Heart left ventricle (tissue), 16 donors: ENCODE measurements at regions of chr9 and their contacts with region 1.

Region 1: GRCh38 chr9:4464911-4465513 is 25.3 kb upstream of the SLC1A1 start:
- DNase-seq: no peak
- ATAC-seq: no peak
- H3K4me3 ChIP-seq: no peak overlapping the region
- H3K27ac ChIP-seq: no peak overlapping the region
- H3K4me1 ChIP-seq: no peaks in the 10 kb centered on the region
- H3K27me3 ChIP-seq: no peaks in the 10 kb centered on the region
- CTCF ChIP-seq: no peak
- POLR2A ChIP-seq: no peak

Region 2: GRCh38 chr9:4510546-4511322 is 45.7 kb after region 1 on chr9:
- intact Hi-C with region 1: loop called in 1 of 10 experiments (anchors 5 kb)
- DNase-seq: no peak
- ATAC-seq: no peak
- H3K4me3 ChIP-seq: no peak overlapping the region
- H3K27ac ChIP-seq: no peak overlapping the region
- H3K4me1 ChIP-seq: no peaks in the 10 kb centered on the region
- H3K27me3 ChIP-seq: no peaks in the 10 kb centered on the region
- CTCF ChIP-seq: no peak
- POLR2A ChIP-seq: no peak

Region 3: GRCh38 chr9:4994166-4994890 is 529.3 kb after region 1 on chr9:
- intact Hi-C with region 1: no loop called
- DNase-seq: no peak
- ATAC-seq: no peak
- H3K4me3 ChIP-seq: no peak overlapping the region
- H3K27ac ChIP-seq: peak overlapping the region in 1 of 12 donors; percentile 6
- H3K4me1 ChIP-seq: peaks cover 0 to 51% (median 0%) of the 10 kb centered on the region in 12 donors
- H3K27me3 ChIP-seq: no peaks in the 10 kb centered on the region
- CTCF ChIP-seq: no peak
- POLR2A ChIP-seq: no peak